ENCODE measurements at regions of chr1 and their contacts with region 1.

Region 1: GRCh38 chr1:230123280-230124185 is 56.5 kb downstream of the GALNT2 start:
- DNase-seq: peak; percentile 47
- H3K4me3 Mint-ChIP-seq: peak overlapping the region; percentile 45
- H3K27ac Mint-ChIP-seq: peak overlapping the region; percentile 73
- H3K4me1 Mint-ChIP-seq: peaks cover 68% of the 10 kb centered on the region
- H3K27me3 Mint-ChIP-seq: no peaks in the 10 kb centered on the region

Region 2: DNA sequence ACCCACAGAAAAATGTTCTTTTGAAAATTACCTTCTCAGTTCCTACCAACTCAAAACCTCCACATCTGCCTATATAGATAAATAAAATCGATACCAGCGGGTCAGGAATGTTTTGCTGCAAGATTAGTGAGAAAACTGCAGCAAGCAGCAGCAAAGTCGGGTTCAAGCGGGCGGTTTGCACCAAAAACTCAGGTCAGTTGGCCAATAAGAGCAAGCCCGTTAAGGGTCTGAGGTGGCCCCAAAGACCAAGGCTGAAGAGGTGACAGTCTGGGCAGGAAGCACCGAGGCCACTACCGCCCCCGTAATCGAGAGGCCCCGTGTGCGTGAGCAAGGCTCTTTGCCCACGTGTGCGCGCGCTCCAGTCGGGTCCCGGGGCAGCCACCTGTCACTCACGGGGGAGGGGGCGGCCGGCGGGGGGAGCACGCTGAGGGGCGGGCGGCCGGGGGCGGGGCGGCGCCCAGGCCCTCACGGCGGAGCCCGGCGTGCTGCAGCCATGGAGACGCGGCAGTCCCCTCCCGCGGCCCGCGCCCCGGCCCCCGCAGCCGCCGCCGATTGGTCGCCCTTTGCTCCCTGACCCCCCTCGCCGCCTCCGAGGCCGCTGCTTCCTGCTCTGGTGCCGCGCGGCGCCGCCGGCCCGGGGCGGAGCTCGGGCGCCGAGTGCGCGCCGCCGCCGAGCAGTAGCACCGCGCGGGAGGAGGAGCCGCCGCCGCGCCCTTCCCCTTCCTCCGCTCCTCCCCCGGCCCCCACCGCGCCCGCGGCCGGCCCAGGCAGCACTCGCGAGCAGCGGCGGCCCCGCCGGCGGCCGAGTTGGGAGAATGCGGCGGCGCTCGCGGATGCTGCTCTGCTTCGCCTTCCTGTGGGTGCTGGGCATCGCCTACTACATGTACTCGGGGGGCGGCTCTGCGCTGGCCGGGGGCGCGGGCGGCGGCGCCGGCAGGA is 56.8 kb before region 1 on chr1 and contains the start of gene GALNT2:
- intact Hi-C with region 1: loop called (anchors 1 kb)
- DNase-seq: peak; percentile 88
- H3K4me3 Mint-ChIP-seq: peak within 1 kb of the TSS; percentile 93
- H3K27ac Mint-ChIP-seq: peak within 1 kb of the TSS; percentile 89
- H3K4me1 Mint-ChIP-seq: peaks cover 48% of the 10 kb centered on the region
- H3K27me3 Mint-ChIP-seq: peaks cover 3% of the 10 kb centered on the region
- total RNA-seq, gene GALNT2: 67.6 and 67.9 TPM in 2 replicates

Region 3: GRCh38 chr1:230084138-230084880 is 39.2 kb before region 1 on chr1:
- intact Hi-C with region 1: loop called (anchors 1 kb)
- DNase-seq: peak; percentile 23
- H3K4me3 Mint-ChIP-seq: peak overlapping the region; percentile 30
- H3K27ac Mint-ChIP-seq: peak overlapping the region; percentile 83
- H3K4me1 Mint-ChIP-seq: peaks cover 66% of the 10 kb centered on the region
- H3K27me3 Mint-ChIP-seq: peaks cover 1% of the 10 kb centered on the region

Region 4: GRCh38 chr1:230109895-230110667 is 13.5 kb before region 1 on chr1:
- intact Hi-C with region 1: loop called (anchors 1 kb)
- DNase-seq: peak; percentile 57
- H3K4me3 Mint-ChIP-seq: peak overlapping the region; percentile 53
- H3K27ac Mint-ChIP-seq: peak overlapping the region; percentile 89
- H3K4me1 Mint-ChIP-seq: peaks cover 82% of the 10 kb centered on the region
- H3K27me3 Mint-ChIP-seq: no peaks in the 10 kb centered on the region

Region 5: GRCh38 chr1:230167419-230167852 is 43.9 kb after region 1 on chr1:
- intact Hi-C with region 1: loop called (anchors 2 kb)
- DNase-seq: peak; percentile 12
- H3K4me3 Mint-ChIP-seq: no peak overlapping the region
- H3K27ac Mint-ChIP-seq: no peak overlapping the region
- H3K4me1 Mint-ChIP-seq: peaks cover 39% of the 10 kb centered on the region
- H3K27me3 Mint-ChIP-seq: no peaks in the 10 kb centered on the region

Region 6: GRCh38 chr1:230248016-230248888 is 124.7 kb after region 1 on chr1:
- intact Hi-C with region 1: no loop called
- DNase-seq: no peak
- H3K4me3 Mint-ChIP-seq: no peak overlapping the region
- H3K27ac Mint-ChIP-seq: no peak overlapping the region
- H3K4me1 Mint-ChIP-seq: peaks cover 41% of the 10 kb centered on the region
- H3K27me3 Mint-ChIP-seq: no peaks in the 10 kb centered on the region